PC-3 (cell line): ENCODE measurements at regions of chr5 and their contacts with region 1.

Region 1: GRCh38 chr5:176537608-176538504 is 654 bp upstream of the RNF44 start:
- DNase-seq: peak; percentile 99
- ATAC-seq: peak; percentile 75
- H3K4me3 ChIP-seq: peak overlapping the region; percentile 93
- H3K27ac ChIP-seq: peak overlapping the region; percentile 74
- H3K4me1 ChIP-seq: peaks cover 48% of the 10 kb centered on the region
- H3K27me3 ChIP-seq: no peaks in the 10 kb centered on the region
- CTCF ChIP-seq: no peak

Region 2: GRCh38 chr5:176388444-176389134 is 149.3 kb before region 1 on chr5 and contains the starts of genes HIGD2A and NOP16:
- CTCF ChIA-PET with region 1: no interaction called
- POLR2A ChIA-PET with region 1: no interaction called
- intact Hi-C with region 1: loop called (anchors 1 kb)
- DNase-seq: peak; percentile 99
- ATAC-seq: peak; percentile 83
- H3K4me3 ChIP-seq: peak within 1 kb of the TSS; percentile 94
- H3K27ac ChIP-seq: peak within 1 kb of the TSS; percentile 94
- H3K4me1 ChIP-seq: peaks cover 14% of the 10 kb centered on the region
- H3K27me3 ChIP-seq: no peaks in the 10 kb centered on the region
- CTCF ChIP-seq: no peak
- total RNA-seq, gene HIGD2A: 164 and 174 TPM in 2 replicates
- total RNA-seq, gene NOP16: 92.6 and 103 TPM in 2 replicates

Region 3: DNA sequence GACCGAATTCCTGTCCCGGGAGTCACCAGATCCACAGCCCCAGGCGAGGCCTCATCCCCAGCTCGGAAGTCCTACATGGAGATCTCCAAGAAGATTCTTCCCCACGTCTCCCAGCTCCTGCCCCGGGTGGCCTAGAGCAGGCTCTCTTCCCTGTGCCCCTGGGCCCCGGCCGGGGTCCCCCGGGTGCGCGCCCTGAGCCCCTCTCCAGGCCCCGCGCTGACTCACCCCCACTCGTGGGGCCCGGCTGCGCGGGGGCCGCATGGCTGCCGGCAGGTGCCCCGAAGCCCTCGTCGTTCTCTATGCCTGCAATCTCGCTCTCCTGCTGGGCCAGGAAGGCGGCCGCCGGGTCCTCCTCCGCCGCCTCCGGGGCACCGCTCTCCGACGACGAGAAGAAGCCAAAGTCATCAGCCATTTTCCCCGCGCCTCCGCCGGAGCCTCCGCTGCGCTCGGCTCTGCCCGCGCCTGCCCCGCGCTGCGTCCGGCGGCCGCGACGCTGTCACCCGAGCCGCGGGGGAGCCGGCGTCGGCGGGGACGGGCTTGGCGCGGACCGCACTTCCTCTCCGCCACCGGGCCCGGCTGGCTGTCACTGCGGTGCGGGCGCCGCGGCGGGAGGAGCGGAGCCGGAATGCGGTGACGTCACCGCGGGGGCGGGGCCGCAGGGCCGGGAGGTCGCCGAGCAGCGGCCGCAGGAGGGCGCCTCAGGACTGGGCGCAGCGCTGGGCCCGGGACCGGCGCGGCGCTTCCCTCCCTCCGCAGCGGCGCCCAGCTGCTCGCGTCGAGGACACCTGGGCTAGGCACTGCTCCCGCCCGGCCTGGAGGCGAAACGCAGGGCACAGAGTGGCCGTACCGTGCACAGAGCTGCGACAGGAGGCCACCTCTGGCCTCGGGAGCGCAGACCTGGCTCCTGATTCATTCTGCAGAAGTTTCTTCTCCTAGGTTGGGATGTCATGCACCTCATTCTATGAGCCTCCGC is 121.6 kb before region 1 on chr5 and contains the start of gene CLTB:
- CTCF ChIA-PET with region 1: interaction called, 8 read pairs
- POLR2A ChIA-PET with region 1: interaction called, 3 read pairs
- intact Hi-C with region 1: loop called (anchors 1 kb)
- DNase-seq: peak; percentile 93
- ATAC-seq: peak; percentile 83
- H3K4me3 ChIP-seq: peak within 1 kb of the TSS; percentile 94
- H3K27ac ChIP-seq: peak within 1 kb of the TSS; percentile 69
- H3K4me1 ChIP-seq: peaks cover 59% of the 10 kb centered on the region
- H3K27me3 ChIP-seq: no peaks in the 10 kb centered on the region
- CTCF ChIP-seq: peak; percentile 58
- total RNA-seq, gene CLTB: 354 and 460 TPM in 2 replicates

Region 4: DNA sequence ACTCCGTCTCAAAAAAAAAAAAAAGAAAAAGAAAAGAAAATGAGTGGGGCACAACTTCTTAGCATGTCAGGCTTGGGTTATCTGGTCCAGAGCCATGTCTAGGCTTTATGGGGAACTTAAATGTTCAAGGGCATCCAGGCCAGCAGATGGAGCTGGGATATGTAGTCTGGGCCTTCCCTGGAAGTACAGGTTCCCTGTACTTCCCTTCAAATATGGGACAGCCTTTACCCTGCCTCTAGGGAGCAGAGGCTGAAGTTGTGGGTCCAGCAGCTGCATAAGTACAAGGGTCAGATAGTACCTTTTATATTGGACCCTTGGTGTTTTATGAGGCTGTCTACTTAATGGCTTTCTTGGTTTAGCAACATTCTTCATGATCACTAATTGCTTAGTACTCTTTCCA is 47.6 kb before region 1 on chr5:
- CTCF ChIA-PET with region 1: no interaction called
- POLR2A ChIA-PET with region 1: no interaction called
- intact Hi-C with region 1: loop called (anchors 1 kb)
- DNase-seq: peak; percentile 44
- ATAC-seq: peak; percentile 21
- H3K4me3 ChIP-seq: peak overlapping the region; percentile 12; the same call in 1 of the 2 replicates
- H3K27ac ChIP-seq: peak overlapping the region; percentile 65
- H3K4me1 ChIP-seq: peaks cover 47% of the 10 kb centered on the region
- H3K27me3 ChIP-seq: no peaks in the 10 kb centered on the region
- CTCF ChIP-seq: peak; percentile 40

Region 5: GRCh38 chr5:176714067-176714466 is 176.2 kb after region 1 on chr5:
- CTCF ChIA-PET with region 1: no interaction called
- POLR2A ChIA-PET with region 1: no interaction called
- intact Hi-C with region 1: no loop called
- DNase-seq: peak; percentile 65
- ATAC-seq: peak; percentile 71
- H3K4me3 ChIP-seq: no peak overlapping the region
- H3K27ac ChIP-seq: no peak overlapping the region
- H3K4me1 ChIP-seq: peaks cover 8% of the 10 kb centered on the region; the same call in 1 of the 2 replicates
- H3K27me3 ChIP-seq: peaks cover 17% of the 10 kb centered on the region; the same call in 1 of the 2 replicates
- CTCF ChIP-seq: no peak

Region 6: DNA sequence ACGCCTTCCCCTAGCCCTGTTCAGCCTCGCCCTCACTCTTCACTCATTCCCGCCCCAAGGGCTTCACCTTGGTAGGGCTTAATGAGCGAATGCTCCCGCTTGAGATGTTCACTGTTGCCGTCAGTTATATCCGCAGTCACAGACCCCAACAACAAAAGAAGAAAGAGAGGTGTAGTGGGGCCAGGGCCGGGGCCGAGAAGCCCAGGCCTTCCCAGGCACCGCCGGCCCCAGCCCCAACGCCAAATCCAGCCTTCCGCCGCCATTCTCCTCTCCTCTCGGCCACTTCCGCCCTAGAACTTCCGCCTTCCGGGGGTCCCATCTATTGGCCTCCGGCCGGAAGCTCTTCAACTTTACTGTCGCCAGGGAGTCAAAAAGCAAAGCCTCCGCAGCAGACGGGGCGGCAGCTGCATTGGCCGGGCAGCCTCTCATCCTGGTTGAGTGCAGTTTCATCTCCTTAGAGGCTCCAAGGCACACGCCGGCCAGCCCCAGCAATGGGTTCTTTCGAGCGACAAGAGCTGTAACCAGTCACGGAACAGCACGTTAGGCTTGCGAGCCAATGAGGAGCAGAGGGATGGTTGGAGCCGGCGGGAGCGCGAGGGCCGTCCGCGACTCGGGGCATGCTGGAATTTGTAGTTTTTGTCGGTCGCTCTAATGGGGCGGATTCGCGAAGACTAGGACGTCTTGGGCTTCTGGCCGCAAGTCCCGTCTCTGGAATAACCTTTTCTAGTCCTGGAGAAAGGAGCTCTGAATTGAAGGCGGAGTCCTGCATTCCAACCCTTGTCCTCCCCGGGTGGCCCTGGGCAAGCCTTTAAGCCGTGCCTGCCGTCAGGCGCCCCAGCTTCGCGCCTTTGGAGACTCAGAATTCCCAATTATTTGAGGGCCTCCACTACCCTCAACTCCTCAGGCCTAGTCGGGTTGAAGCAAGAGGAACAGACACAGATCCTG is 813.8 kb after region 1 on chr5 and contains the start of gene LMAN2:
- CTCF ChIA-PET with region 1: no interaction called
- POLR2A ChIA-PET with region 1: interaction called, 11 read pairs
- intact Hi-C with region 1: no loop called
- DNase-seq: peak; percentile 94
- ATAC-seq: peak; percentile 94
- H3K4me3 ChIP-seq: peak within 1 kb of the TSS; percentile 93
- H3K27ac ChIP-seq: peak within 1 kb of the TSS; percentile 93
- H3K4me1 ChIP-seq: peaks cover 36% of the 10 kb centered on the region
- H3K27me3 ChIP-seq: no peaks in the 10 kb centered on the region
- CTCF ChIP-seq: no peak
- total RNA-seq, gene LMAN2: 310 and 369 TPM in 2 replicates